PC-3 (cell line): ENCODE measurements at regions of chr3 and their contacts with region 1.

Region 1: GRCh38 chr3:16069149-16069922 is 105.1 kb upstream of the GALNT15 start:
- DNase-seq: peak; percentile 97
- ATAC-seq: peak; percentile 50
- H3K4me3 ChIP-seq: no peak overlapping the region
- H3K27ac ChIP-seq: peak overlapping the region; percentile 78
- H3K4me1 ChIP-seq: peaks cover 81% of the 10 kb centered on the region
- H3K27me3 ChIP-seq: no peaks in the 10 kb centered on the region
- CTCF ChIP-seq: no peak

Region 2: GRCh38 chr3:15964605-15965442 is 104.5 kb before region 1 on chr3:
- CTCF ChIA-PET with region 1: no interaction called
- POLR2A ChIA-PET with region 1: no interaction called
- intact Hi-C with region 1: no loop called
- DNase-seq: peak; percentile 75
- ATAC-seq: peak; percentile 99
- H3K4me3 ChIP-seq: peak overlapping the region; percentile 39; the same call in 1 of the 2 replicates
- H3K27ac ChIP-seq: peak overlapping the region; percentile 44
- H3K4me1 ChIP-seq: peaks cover 18% of the 10 kb centered on the region
- H3K27me3 ChIP-seq: no peaks in the 10 kb centered on the region
- CTCF ChIP-seq: no peak

Region 3: DNA sequence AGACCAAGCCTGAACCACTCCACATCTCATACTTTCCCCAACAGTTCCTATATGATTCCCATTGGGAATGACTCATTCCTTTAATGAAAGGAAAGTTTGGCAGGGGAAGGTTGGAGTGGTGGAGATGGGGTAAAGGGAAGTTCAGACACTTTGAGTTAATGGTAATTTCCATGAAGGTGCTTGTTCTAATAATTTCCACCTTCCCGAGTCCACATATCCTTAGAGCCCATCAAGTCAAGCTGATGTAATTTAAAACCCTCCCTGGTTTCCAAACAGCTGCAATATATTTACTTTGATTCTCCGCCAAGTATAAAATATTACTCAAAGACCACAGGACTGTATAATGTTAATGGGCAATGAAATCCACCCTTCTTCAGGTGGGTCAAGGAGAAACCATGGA is 10.2 kb after region 1 on chr3:
- CTCF ChIA-PET with region 1: no interaction called
- POLR2A ChIA-PET with region 1: no interaction called
- intact Hi-C with region 1: loop called (anchors 1 kb)
- DNase-seq: peak; percentile 97
- ATAC-seq: peak; percentile 91
- H3K4me3 ChIP-seq: no peak overlapping the region
- H3K27ac ChIP-seq: peak overlapping the region; percentile 75
- H3K4me1 ChIP-seq: peaks cover 21% of the 10 kb centered on the region
- H3K27me3 ChIP-seq: no peaks in the 10 kb centered on the region
- CTCF ChIP-seq: no peak

Region 4: GRCh38 chr3:16090024-16090423 is 20.7 kb after region 1 on chr3:
- CTCF ChIA-PET with region 1: no interaction called
- POLR2A ChIA-PET with region 1: no interaction called
- intact Hi-C with region 1: loop called (anchors 1 kb)
- DNase-seq: peak; percentile 98
- ATAC-seq: peak; percentile 96
- H3K4me3 ChIP-seq: no peak overlapping the region
- H3K27ac ChIP-seq: peak overlapping the region; percentile 52
- H3K4me1 ChIP-seq: peaks cover 30% of the 10 kb centered on the region
- H3K27me3 ChIP-seq: no peaks in the 10 kb centered on the region
- CTCF ChIP-seq: no peak

Region 5: DNA sequence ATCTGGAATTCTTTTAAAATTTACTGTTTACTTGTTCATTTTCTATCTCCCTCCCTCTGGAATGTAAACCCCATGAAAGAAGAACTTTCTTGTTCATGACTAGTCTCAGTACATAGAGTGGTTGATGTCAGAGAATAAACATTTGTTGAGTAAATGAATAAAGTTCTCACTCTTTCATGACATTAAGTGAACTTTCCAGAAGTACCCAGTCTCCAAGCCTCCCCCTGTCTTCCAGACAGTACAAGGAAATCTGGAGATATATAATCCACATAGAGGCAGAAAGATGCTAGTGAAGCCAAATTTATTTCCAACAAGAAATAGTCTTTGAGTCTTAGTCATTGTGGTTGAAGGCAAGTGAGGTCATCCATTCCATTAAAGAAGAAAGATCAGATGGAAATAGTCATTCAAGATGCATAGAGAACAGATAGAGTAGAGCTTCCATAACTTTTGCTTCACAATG is 33.6 kb after region 1 on chr3:
- CTCF ChIA-PET with region 1: no interaction called
- POLR2A ChIA-PET with region 1: no interaction called
- intact Hi-C with region 1: loop called (anchors 1 kb)
- DNase-seq: peak; percentile 68
- ATAC-seq: peak; percentile 63
- H3K4me3 ChIP-seq: no peak overlapping the region
- H3K27ac ChIP-seq: peak overlapping the region; percentile 97
- H3K4me1 ChIP-seq: peaks cover 22% of the 10 kb centered on the region
- H3K27me3 ChIP-seq: no peaks in the 10 kb centered on the region
- CTCF ChIP-seq: no peak; the same call in 1 of the 2 replicates

Region 6: DNA sequence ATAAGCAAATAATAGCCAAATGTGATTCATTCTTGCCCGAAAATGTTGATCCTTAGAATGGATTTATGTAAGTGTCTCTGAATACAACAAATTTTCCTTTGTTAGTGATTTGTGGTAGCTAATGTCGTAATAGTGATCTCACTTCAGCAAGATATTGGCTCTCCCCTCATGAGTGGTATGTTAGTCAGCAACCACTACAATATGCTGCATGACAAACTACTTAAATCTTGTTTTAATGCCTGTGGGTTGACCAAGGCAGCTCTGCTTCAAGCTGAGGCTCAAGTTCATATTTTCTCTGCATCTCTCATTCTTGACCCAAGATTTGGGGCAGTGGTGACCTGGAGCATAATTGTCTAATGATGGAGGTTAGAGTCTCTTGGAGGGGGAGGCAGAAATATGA is 55.3 kb after region 1 on chr3:
- CTCF ChIA-PET with region 1: no interaction called
- POLR2A ChIA-PET with region 1: interaction called, 3 read pairs
- intact Hi-C with region 1: loop called (anchors 5 kb)
- DNase-seq: peak; percentile 94
- ATAC-seq: peak; percentile 95
- H3K4me3 ChIP-seq: no peak overlapping the region
- H3K27ac ChIP-seq: peak overlapping the region; percentile 86
- H3K4me1 ChIP-seq: peaks cover 18% of the 10 kb centered on the region
- H3K27me3 ChIP-seq: no peaks in the 10 kb centered on the region
- CTCF ChIP-seq: no peak

Region 7: GRCh38 chr3:16140116-16140893 is 71.0 kb after region 1 on chr3:
- CTCF ChIA-PET with region 1: interaction called, 13 read pairs
- POLR2A ChIA-PET with region 1: interaction called, 3 read pairs
- intact Hi-C with region 1: loop called (anchors 2 kb)
- DNase-seq: peak; percentile 78
- ATAC-seq: peak; percentile 88
- H3K4me3 ChIP-seq: no peak overlapping the region
- H3K27ac ChIP-seq: peak overlapping the region; percentile 58
- H3K4me1 ChIP-seq: peaks cover 15% of the 10 kb centered on the region
- H3K27me3 ChIP-seq: no peaks in the 10 kb centered on the region
- CTCF ChIP-seq: no peak